MCF 10A (cell line): ENCODE measurements at regions of chrX and their contacts with region 1.

Region 1: DNA sequence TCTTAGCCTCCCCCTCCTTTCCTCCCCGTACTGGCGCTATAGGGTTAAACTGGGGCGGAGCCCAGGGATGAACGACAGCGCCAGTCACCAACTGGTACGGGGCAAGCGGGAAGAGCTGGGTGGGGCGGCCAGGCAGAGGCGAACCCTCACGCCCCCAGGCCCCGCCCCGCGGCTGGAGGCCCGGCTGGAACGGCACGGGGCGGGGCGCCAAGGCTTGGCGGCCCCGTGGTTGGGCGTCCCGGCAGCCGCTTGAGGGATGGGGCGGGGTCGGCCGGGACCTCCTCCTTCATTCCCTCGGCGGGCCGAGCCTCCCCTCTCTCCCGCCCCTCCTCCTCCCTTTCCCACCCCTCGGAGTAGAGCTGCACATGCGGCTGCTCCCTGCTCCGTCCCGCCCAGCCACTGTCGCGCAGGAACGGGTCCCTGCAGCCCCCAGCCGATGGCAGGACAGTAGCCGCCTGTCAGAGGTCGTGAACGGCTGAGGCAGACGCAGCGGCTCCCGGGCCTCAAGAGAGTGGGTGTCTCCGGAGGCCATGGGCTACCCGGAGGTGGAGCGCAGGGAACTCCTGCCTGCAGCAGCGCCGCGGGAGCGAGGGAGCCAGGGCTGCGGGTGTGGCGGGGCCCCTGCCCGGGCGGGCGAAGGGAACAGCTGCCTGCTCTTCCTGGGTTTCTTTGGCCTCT is at the start of gene EDA:
- DNase-seq: peak; percentile 86
- H3K4me3 Mint-ChIP-seq: peak within 1 kb of the TSS; percentile 78
- H3K27ac Mint-ChIP-seq: no peak within 1 kb of the TSS
- H3K4me1 Mint-ChIP-seq: peaks cover 5% of the 10 kb centered on the region
- H3K27me3 Mint-ChIP-seq: peaks cover 60% of the 10 kb centered on the region
- CTCF ChIP-seq: no peak
- total RNA-seq, gene EDA: 1.1 and 1.3 TPM in 2 replicates

Region 2: GRCh38 chrX:69424161-69424560 is 191.8 kb before region 1 on chrX:
- CTCF ChIA-PET with region 1: no interaction called
- POLR2A ChIA-PET with region 1: no interaction called
- intact Hi-C with region 1: loop called (anchors 5 kb)
- DNase-seq: peak; percentile 27
- H3K4me3 Mint-ChIP-seq: no peak overlapping the region
- H3K27ac Mint-ChIP-seq: no peak overlapping the region
- H3K4me1 Mint-ChIP-seq: no peaks in the 10 kb centered on the region
- H3K27me3 Mint-ChIP-seq: peaks cover 62% of the 10 kb centered on the region
- CTCF ChIP-seq: peak; percentile 36

Region 3: DNA sequence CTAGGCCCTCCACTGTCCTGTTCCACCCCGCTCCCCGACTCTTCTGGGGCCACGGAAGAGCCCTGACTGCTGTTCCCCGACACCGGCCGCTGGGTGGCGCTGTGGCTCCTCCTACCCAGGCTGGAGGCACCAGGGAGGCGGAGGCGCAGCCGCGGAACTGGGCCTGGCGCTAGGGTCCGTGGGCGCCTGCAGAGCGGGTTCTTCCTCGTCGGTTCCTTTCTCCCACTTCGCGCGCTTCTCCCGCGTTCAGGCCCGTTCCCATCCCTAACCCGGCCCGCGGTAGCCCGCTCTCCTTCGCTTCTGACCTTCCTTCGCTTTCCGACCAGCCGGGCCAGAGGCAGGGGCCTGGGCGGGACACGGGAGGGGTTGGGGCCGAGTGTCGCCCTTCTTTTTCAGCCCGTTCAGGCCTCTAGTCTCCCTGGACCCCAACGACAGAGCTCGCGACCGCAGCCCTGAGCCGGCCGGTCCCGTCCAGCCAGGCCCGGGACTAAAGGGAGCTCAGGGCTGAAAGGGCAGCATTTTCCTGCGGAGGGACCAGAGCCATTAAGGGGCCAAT is 77.5 kb before region 1 on chrX:
- CTCF ChIA-PET with region 1: interaction called, 109 read pairs
- POLR2A ChIA-PET with region 1: no interaction called
- intact Hi-C with region 1: loop called (anchors 1 kb)
- DNase-seq: peak; percentile 63
- H3K4me3 Mint-ChIP-seq: peak overlapping the region; percentile 56
- H3K27ac Mint-ChIP-seq: peak overlapping the region; percentile 36
- H3K4me1 Mint-ChIP-seq: no peaks in the 10 kb centered on the region
- H3K27me3 Mint-ChIP-seq: peaks cover 31% of the 10 kb centered on the region
- CTCF ChIP-seq: peak; percentile 79

Region 4: GRCh38 chrX:69603566-69604194 is 12.2 kb before region 1 on chrX:
- CTCF ChIA-PET with region 1: interaction called, 45 read pairs
- POLR2A ChIA-PET with region 1: interaction called, 10 read pairs
- intact Hi-C with region 1: no loop called
- DNase-seq: peak; percentile 51
- H3K4me3 Mint-ChIP-seq: no peak overlapping the region
- H3K27ac Mint-ChIP-seq: no peak overlapping the region
- H3K4me1 Mint-ChIP-seq: no peaks in the 10 kb centered on the region
- H3K27me3 Mint-ChIP-seq: peaks cover 19% of the 10 kb centered on the region
- CTCF ChIP-seq: no peak

Region 5: GRCh38 chrX:70030301-70030767 is 414.4 kb after region 1 on chrX:
- CTCF ChIA-PET with region 1: interaction called, 7 read pairs
- POLR2A ChIA-PET with region 1: interaction called, 3 read pairs
- intact Hi-C with region 1: loop called (anchors 1 kb)
- DNase-seq: peak; percentile 78
- H3K4me3 Mint-ChIP-seq: no peak overlapping the region
- H3K27ac Mint-ChIP-seq: no peak overlapping the region
- H3K4me1 Mint-ChIP-seq: peaks cover 5% of the 10 kb centered on the region
- H3K27me3 Mint-ChIP-seq: peaks cover 47% of the 10 kb centered on the region
- CTCF ChIP-seq: peak; percentile 77